Common myeloid progenitor, CD34-positive (primary cell): ENCODE measurements at regions of chr11 and their contacts with region 1.

Region 1: DNA sequence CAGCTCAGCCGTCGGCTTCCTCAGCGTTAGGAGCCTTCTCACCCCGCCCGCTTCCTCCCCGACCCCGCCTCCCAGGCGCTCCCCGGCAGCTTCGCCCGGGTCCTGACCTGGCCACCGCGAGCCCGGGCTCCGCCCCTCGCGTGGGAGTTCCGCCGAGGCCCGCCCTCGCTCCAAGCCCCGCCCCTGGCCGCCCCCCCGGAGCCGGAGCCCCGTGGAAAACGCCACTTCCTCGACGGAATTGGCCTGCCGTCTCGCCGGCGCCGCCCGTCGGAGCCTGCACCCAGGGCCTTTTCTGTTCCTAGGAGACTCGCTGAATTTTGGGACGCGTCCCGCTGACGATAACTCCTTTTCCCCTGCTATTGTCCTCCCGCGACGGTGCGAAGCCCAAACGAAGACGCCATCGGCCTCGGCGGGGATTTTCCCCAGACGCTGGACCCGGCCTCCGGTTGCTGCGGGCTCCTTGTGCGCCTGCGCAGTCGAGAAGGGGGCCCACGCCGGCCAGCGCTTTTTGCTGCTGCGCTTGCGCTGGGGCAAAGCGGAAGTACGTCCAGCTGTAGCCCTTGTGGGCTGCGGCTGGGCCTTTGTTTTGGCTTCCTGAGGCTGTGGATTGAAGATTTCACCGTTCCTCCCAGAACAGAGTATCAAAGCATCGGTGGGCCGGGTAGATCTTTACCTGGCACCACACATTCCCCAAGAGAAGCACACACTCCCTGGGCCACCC is 10.0 kb downstream of the RELA start:
- DNase-seq: peak; percentile 96 to 98 (median 97)
- H3K4me3 ChIP-seq: peak overlapping the region; percentile 20 to 78 (median 66)
- H3K27ac ChIP-seq: peak overlapping the region; percentile 93 to 94
- H3K4me1 ChIP-seq: peaks cover 13 to 42% (median 33%) of the 10 kb centered on the region in 4 experiments
- H3K27me3 ChIP-seq: no peaks in the 10 kb centered on the region

Region 2: DNA sequence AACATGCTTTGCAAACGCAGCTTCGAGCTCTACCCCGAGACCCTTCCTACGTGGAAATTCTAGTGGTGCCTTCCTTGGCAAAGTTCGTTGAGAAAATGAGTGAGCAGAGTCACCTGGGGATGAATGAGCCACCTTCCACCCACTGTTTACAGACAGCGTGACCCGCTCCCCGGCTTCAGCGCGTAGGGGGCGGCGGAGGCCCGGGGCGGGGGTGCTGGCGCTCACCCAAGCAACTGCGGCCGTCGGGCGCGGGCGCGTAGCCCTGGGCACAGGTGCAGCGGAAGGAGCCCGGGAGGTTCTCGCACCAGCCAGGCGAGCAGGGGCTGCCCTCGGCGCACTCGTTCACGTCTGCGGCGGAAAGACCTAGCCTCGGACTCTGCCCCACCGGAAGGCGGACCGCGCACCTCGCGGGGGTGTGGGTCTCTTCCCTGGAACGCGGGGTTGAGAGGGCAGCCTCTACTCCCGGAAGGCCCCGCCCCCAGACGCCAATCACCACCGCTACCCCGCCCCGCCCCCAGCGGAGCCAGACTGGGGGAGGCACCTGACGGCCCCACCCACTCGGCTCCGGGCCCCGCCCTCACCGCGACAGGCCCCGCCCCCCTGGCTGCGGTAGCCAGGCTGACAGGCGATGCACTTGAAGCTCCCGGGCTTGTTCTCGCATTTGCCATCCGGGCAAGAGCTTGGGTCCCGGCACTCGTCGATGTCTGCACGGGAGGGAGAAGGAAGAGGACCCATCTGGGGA is 106.3 kb before region 1 on chr11:
- CTCF ChIA-PET with region 1: no interaction called
- POLR2A ChIA-PET with region 1: no interaction called
- DNase-seq: peak; percentile 92 to 98 (median 96)
- H3K4me3 ChIP-seq: peak overlapping the region in 5 of 7 experiments; percentile 19 to 63 (median 54)
- H3K27ac ChIP-seq: peak overlapping the region in 1 of 2 experiments; percentile 50
- H3K4me1 ChIP-seq: peaks cover 7 to 44% (median 39%) of the 10 kb centered on the region in 4 experiments
- H3K27me3 ChIP-seq: no peaks in the 10 kb centered on the region

Region 3: DNA sequence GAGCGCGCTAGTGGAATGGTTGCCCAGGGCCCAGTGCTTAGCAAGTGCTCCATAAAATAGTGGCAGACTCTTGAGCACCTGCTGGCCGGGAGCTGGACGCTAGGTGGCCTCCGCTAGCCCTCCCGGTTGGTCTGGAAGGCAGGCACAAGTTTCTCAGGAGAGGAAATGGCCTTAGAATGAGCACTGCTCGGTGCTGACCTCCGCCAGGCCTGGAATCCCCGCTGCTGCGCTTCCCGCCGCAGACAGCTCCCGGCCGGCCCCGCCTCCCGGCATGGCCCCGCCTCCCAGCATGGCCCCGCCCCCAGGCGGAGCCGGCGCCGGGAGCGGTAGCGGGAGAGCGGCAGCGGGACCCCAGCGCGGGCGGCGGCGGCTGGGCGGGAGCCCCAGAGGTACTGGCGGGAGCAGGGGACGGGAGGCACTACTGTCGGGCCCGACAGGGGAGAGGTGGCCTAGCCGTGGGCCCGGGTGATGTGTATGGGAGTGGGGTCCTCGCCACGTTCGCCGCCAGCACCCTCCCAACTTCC is 14.8 kb before region 1 on chr11 and contains the start of gene SIPA1:
- CTCF ChIA-PET with region 1: interaction called, 54 read pairs
- POLR2A ChIA-PET with region 1: interaction called, 43 read pairs
- DNase-seq: peak in 2 of 3 donors; percentile 63 to 67
- H3K4me3 ChIP-seq: peak within 1 kb of the TSS; percentile 60 to 84 (median 79)
- H3K27ac ChIP-seq: peak within 1 kb of the TSS; percentile 33 to 84
- H3K4me1 ChIP-seq: peaks cover 5 to 82% (median 70%) of the 10 kb centered on the region in 4 experiments
- H3K27me3 ChIP-seq: no peaks in the 10 kb centered on the region

Region 4: DNA sequence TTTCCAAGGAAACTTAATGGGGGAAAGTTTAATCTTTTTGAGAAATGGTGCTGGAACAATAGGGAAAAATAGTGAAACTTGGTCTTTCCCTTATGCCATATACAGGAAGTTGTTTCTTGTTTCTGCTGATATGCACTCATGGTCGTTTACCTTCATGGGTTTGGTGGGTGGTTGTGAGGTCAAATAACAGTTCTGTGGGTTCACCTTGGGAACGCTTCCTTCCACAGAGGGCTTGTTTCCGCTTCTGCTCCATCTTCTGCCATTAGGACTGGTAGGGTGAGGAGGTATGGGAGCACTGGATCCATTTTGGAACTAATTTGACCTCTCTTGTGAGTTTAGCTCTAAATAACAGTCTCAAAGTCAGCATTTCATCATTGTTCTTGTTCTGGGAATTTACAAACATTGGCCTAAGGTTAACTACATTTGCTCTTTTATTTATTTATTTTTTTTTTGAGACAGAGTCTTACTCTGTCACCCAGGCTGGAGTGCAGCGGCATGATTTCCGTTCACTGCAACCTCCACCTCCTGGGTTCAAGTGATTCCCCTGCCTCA is 27.6 kb after region 1 on chr11:
- CTCF ChIA-PET with region 1: no interaction called
- POLR2A ChIA-PET with region 1: no interaction called
- DNase-seq: no peak
- H3K4me3 ChIP-seq: no peak overlapping the region
- H3K27ac ChIP-seq: no peak overlapping the region
- H3K4me1 ChIP-seq: no peaks in the 10 kb centered on the region
- H3K27me3 ChIP-seq: no peaks in the 10 kb centered on the region

Region 5: GRCh38 chr11:65730484-65730883 is 77.8 kb after region 1 on chr11:
- CTCF ChIA-PET with region 1: no interaction called
- POLR2A ChIA-PET with region 1: no interaction called
- DNase-seq: no peak
- H3K4me3 ChIP-seq: no peak overlapping the region
- H3K27ac ChIP-seq: no peak overlapping the region
- H3K4me1 ChIP-seq: no peaks in the 10 kb centered on the region
- H3K27me3 ChIP-seq: peaks cover 0 to 3% (median 0%) of the 10 kb centered on the region in 5 experiments